ENCODE measurements at regions of chr15 and their contacts with region 1.

Region 1: DNA sequence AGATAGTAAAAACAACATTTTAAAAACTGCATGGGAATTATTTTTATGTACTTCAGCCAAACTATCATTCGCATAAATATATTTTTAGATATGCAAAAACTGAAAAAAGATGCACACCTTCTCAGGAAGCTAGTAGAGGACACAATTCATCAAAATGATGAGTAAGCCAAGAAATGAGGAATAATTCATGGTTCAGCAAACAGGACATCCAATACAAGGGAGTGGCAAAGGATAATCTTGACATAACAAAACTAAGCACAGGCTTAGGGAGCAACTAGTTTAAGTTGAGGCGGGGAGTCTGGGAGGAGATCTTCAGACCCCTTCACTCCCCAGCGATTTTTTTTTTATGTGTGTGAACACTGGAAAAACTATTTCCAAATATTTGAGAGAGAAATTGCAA is 93.7 kb downstream of the ZNF280D start:
- DNase-seq: peak; percentile 2
- H3K4me3 ChIP-seq: no peak overlapping the region
- H3K27ac ChIP-seq: no peak overlapping the region
- H3K4me1 ChIP-seq: no peaks in the 10 kb centered on the region
- H3K27me3 ChIP-seq: no peaks in the 10 kb centered on the region
- CTCF ChIP-seq: no peak

Region 2: DNA sequence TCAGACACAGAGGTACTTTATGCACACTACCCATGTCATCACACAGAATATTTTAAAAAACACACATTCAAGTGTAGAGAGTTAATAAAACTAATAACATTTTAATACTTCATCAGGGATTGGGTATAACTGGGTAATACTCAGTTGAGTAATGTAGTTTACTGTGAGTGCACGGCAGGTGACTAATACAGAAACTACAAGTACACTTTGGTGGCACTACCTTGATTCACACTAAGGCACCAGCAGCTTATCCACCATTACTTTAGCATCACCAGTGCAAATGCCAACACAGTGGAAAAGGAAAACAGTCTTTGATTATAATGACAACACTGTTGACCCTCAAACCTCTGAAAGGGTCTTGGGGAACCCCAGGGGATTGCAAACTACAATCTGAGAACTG is 60.1 kb after region 1 on chr15:
- CTCF ChIA-PET with region 1: no interaction called
- POLR2A ChIA-PET with region 1: no interaction called
- intact Hi-C with region 1: loop called (anchors 10 kb)
- DNase-seq: no peak
- H3K4me3 ChIP-seq: no peak overlapping the region
- H3K27ac ChIP-seq: no peak overlapping the region
- H3K4me1 ChIP-seq: peaks cover 3% of the 10 kb centered on the region
- H3K27me3 ChIP-seq: no peaks in the 10 kb centered on the region
- CTCF ChIP-seq: no peak

Measured in A673 (cell line).